PC-9 (cell line): ENCODE measurements at regions of chr12 and their contacts with region 1.

Region 1: GRCh38 chr12:8687846-8688601 is 9.8 kb upstream of the RIMKLB start:
- DNase-seq: peak; percentile 59 to 71
- H3K4me3 ChIP-seq: no peak overlapping the region
- H3K27ac ChIP-seq: no peak overlapping the region
- H3K4me1 ChIP-seq: peaks cover 13% of the 10 kb centered on the region; the same call in 1 of the 2 replicates
- H3K27me3 ChIP-seq: no peaks in the 10 kb centered on the region
- CTCF ChIP-seq: no peak

Region 2: DNA sequence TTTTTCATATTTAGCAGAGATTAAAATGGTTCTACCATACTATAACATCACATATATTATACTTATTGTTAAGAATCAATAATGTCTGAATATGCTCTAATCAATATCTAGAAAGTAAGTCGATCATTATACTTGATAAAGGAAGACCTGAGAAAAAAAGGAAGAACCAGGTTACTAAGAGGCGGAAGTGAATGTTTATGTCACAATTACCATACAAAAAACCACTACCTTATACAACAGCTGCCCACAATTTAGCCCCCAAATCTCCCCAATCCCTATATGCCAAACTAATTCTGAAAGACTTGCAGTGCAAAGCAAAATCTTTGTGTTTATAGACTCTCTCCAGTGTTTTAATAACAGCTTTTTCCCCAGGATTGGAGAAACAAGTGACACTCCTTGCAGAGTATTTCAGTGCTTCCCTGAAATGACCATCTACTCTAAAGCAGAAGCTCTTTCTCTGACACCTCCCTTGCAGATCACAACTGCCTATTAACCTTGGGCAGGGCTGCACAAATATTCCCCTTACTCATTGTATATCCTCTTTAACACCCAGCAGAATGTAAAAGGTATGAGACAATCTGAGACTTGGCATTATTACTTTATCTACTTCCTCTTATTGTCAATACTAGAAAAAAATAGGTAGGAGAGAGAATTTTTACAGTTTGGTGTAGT is 739.3 kb before region 1 on chr12:
- CTCF ChIA-PET with region 1: no interaction called
- POLR2A ChIA-PET with region 1: no interaction called
- intact Hi-C with region 1: no loop called
- DNase-seq: peak in 1 of 2 experiments; percentile 78
- H3K4me3 ChIP-seq: no peak overlapping the region
- H3K27ac ChIP-seq: peak overlapping the region; percentile 48
- H3K4me1 ChIP-seq: peaks cover 26% of the 10 kb centered on the region
- H3K27me3 ChIP-seq: no peaks in the 10 kb centered on the region
- CTCF ChIP-seq: no peak

Region 3: DNA sequence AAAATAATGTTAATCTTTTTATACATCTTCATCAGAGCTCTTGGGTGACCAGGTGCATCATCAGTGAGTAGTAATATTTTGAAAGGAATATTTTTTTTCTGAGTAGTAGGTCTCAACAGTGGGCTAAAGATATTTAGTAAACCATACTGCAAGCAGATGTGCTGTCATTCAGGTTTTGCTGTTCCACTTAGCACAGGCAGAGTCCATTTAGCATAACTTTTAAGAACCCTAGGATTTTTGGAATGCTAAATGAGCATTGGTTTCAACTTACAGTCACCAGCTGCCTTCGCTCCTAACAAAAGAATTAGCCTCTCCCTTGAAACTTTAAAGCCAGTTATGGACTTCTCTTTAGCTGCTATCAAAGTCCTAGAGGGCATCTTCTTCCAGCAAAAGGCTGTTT is 34.3 kb after region 1 on chr12:
- CTCF ChIA-PET with region 1: no interaction called
- POLR2A ChIA-PET with region 1: interaction called, 38 read pairs
- intact Hi-C with region 1: no loop called
- DNase-seq: no peak
- H3K4me3 ChIP-seq: no peak overlapping the region
- H3K27ac ChIP-seq: no peak overlapping the region
- H3K4me1 ChIP-seq: no peaks in the 10 kb centered on the region
- H3K27me3 ChIP-seq: no peaks in the 10 kb centered on the region
- CTCF ChIP-seq: no peak

Region 4: GRCh38 chr12:9319044-9319841 is 631.2 kb after region 1 on chr12:
- CTCF ChIA-PET with region 1: no interaction called
- POLR2A ChIA-PET with region 1: interaction called, 15 read pairs
- intact Hi-C with region 1: no loop called
- DNase-seq: no peak
- H3K4me3 ChIP-seq: no peak overlapping the region
- H3K27ac ChIP-seq: no peak overlapping the region
- H3K4me1 ChIP-seq: no peaks in the 10 kb centered on the region
- H3K27me3 ChIP-seq: 0 out of 2 replicates have a peak, but pooled peaks cover 5% of the 10 kb centered on the region
- CTCF ChIP-seq: no peak